ENCODE measurements at regions of chr18 and their contacts with region 1.

Region 1: DNA sequence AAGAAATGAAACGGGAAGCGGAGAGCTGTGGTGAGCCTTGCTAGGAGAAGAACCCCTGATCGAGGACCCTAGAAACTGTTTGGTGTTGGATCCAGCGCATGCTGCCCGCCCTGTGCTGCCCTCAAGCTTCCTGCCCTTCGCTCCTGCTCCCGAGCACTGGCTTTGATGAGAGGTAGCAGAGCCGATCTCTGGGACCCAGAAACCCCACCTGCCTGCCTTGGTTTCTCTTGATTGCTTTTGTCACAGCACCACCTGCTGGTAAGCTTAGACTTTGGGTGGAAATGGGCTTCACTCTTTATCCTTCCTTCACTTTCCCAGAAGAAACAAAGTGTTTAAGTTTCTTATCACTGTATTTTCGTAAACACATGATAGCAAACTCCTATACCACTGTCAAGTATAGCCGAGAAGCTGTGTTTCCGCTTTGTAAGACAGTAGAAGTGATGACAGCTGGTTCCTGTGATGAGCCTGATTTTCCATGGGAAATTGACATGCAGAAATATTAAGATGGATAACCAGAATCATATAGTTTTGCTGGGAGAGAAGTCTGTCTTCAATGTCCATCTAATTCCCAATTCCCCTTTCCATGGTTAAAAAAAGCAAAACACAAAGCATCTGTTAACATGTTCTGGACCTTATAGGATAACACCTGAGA is 267.4 kb downstream of the PHLPP1 start:
- DNase-seq: peak; percentile 49
- H3K4me3 ChIP-seq: no peak overlapping the region
- H3K27ac ChIP-seq: no peak overlapping the region
- H3K4me1 ChIP-seq: no peaks in the 10 kb centered on the region
- CTCF ChIP-seq: peak; percentile 78

Region 2: DNA sequence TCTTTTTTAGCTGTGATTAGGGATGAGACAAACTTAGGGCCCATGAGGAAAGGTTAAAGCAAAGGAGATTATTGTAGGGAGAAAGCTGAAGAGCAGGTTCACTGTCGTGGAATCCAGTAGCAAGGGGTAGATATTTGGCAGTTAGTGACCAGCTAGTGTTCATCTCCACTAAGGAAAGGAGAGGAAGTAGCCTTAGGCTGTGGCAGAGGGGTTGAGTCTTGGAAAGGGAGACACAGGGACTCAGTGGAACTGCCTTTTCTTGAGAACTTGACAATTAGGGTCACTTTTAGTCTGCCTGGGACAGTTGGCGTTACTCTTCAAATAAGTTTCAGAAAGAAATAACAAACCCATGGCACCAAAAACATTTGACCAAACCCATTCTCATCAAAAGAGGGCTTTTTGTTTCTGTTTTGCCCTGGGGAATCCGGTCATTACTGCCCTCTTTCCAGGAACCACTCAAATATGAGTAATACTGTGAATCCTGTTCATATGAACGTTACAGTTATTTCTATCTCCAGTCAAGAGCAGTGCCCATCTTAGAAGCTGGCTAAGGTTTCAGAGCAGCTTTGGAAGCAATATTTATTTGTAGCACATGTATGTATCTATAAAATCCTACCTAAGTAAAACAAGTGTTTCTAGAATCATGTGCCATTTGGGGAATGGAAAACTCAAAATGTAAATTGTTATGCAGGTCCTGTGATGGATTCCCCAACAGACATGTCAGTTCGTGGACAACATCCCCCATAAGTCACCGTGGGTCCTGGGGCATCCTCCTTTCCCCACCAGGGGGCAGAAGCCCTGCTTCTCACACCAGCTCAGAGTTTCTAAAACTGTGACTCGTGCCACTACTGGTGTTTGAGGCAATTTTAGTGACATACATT is 344.7 kb before region 1 on chr18:
- CTCF ChIA-PET with region 1: no interaction called
- POLR2A ChIA-PET with region 1: no interaction called
- intact Hi-C with region 1: loop called (anchors 5 kb)
- DNase-seq: peak; percentile 58
- H3K4me3 ChIP-seq: no peak overlapping the region
- H3K27ac ChIP-seq: no peak overlapping the region
- H3K4me1 ChIP-seq: peaks cover 9% of the 10 kb centered on the region
- CTCF ChIP-seq: peak; percentile 78